Activated CD4-positive, alpha-beta memory T cell treated with anti-CD3 and anti-CD28 coated beads for 36 hours (primary cell): ENCODE measurements at regions of chr21 and their contacts with region 1.

Region 1: GRCh38 chr21:25573409-25574206 is 33.7 kb downstream of the MRPL39 start:
- DNase-seq: peak; percentile 80
- H3K4me3 Mint-ChIP-seq: peak overlapping the region; percentile 68
- H3K27ac Mint-ChIP-seq: peak overlapping the region; percentile 89
- H3K4me1 Mint-ChIP-seq: peaks cover 80% of the 10 kb centered on the region
- H3K27me3 Mint-ChIP-seq: no peaks in the 10 kb centered on the region

Region 2: GRCh38 chr21:25115021-25115420 is 458.6 kb before region 1 on chr21:
- CTCF ChIA-PET with region 1: no interaction called
- POLR2A ChIA-PET with region 1: no interaction called
- intact Hi-C with region 1: no loop called
- DNase-seq: no peak
- H3K4me3 Mint-ChIP-seq: no peak overlapping the region
- H3K27ac Mint-ChIP-seq: no peak overlapping the region
- H3K4me1 Mint-ChIP-seq: no peaks in the 10 kb centered on the region
- H3K27me3 Mint-ChIP-seq: no peaks in the 10 kb centered on the region

Region 3: GRCh38 chr21:25188677-25189079 is 384.9 kb before region 1 on chr21:
- CTCF ChIA-PET with region 1: no interaction called
- POLR2A ChIA-PET with region 1: no interaction called
- intact Hi-C with region 1: loop called (anchors 1 kb)
- DNase-seq: peak; percentile 12
- H3K4me3 Mint-ChIP-seq: no peak overlapping the region
- H3K27ac Mint-ChIP-seq: no peak overlapping the region
- H3K4me1 Mint-ChIP-seq: no peaks in the 10 kb centered on the region
- H3K27me3 Mint-ChIP-seq: no peaks in the 10 kb centered on the region

Region 4: DNA sequence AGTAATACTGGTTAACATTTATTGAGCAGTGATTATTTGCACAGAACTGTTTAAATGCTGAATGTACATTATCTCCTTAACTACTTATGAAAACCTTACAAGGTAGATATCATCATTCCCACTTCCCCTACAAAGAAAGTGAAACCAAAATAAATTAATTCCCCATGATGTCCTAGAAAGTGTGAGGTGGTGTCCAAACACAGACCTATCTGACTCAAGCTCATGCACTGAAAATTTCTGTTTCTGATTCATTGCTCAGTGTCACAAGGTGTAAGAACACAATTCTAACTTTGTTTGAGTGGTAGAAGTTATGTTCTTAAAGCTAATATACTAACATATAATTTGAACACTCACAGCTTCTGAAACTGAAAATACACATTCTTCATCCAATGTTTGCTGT is 145.1 kb before region 1 on chr21:
- CTCF ChIA-PET with region 1: interaction called, 7 read pairs
- POLR2A ChIA-PET with region 1: interaction called, 16 read pairs
- intact Hi-C with region 1: loop called (anchors 1 kb)
- DNase-seq: no peak
- H3K4me3 Mint-ChIP-seq: no peak overlapping the region
- H3K27ac Mint-ChIP-seq: peak overlapping the region; percentile 13
- H3K4me1 Mint-ChIP-seq: peaks cover 51% of the 10 kb centered on the region
- H3K27me3 Mint-ChIP-seq: no peaks in the 10 kb centered on the region

Region 5: DNA sequence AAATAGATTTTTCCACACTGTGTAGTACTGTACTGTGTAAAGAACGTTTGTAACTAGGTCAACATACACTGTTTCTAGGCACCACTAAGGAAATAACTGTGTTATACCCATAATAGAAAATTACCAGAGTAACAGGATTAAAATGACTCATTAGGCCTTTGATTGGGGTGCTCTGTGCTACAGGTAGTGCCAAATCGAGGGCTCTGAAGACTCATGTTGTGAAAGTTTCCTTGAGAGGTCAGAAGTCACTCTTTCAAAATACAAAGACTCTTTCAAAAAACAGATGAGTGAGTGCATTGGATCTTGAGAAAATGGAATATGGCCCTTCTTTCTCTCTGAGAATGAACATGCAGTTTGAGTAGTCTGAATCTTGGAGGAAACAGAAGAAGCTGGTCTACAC is 109.3 kb before region 1 on chr21:
- CTCF ChIA-PET with region 1: no interaction called
- POLR2A ChIA-PET with region 1: interaction called, 41 read pairs
- intact Hi-C with region 1: loop called (anchors 1 kb)
- DNase-seq: peak; percentile 38
- H3K4me3 Mint-ChIP-seq: peak overlapping the region; percentile 50
- H3K27ac Mint-ChIP-seq: peak overlapping the region; percentile 94
- H3K4me1 Mint-ChIP-seq: peaks cover 77% of the 10 kb centered on the region
- H3K27me3 Mint-ChIP-seq: no peaks in the 10 kb centered on the region

Region 6: DNA sequence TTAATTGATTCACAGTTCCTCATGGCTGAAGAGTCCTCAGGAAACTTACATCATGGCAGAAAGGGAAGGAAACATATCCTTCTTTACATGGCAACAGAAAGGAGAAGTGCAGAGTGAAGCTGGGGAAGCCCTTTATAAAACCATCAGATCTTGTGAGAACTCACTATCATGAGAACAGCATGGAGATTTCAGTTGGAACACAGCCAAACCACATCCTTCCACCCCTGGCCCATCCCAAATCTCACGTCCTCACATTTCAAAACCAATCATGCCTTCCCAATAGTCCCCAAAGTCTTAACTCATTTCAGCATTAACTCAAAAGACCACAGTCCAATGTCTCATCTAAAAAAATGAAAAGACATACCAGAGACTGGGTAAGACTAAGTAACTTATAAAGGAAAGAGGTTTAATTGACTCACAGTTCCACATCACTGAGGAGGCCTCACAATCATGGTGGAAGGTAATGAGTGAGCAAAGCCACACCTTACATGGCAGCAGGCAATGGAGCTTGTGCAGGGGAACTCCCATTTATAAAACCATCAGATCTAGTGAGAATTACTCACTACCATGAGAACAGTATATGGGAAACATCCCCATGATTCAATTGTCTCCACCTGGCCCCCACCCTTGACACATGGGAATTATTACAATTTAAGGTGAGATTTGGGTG is 71.5 kb before region 1 on chr21:
- CTCF ChIA-PET with region 1: no interaction called
- POLR2A ChIA-PET with region 1: interaction called, 117 read pairs
- intact Hi-C with region 1: loop called (anchors 1 kb)
- DNase-seq: peak; percentile 84
- H3K4me3 Mint-ChIP-seq: peak overlapping the region; percentile 39
- H3K27ac Mint-ChIP-seq: peak overlapping the region; percentile 87
- H3K4me1 Mint-ChIP-seq: peaks cover 57% of the 10 kb centered on the region
- H3K27me3 Mint-ChIP-seq: no peaks in the 10 kb centered on the region

Region 7: GRCh38 chr21:25561668-25562641 is 11.7 kb before region 1 on chr21:
- CTCF ChIA-PET with region 1: interaction called, 6 read pairs
- POLR2A ChIA-PET with region 1: interaction called, 250 read pairs
- intact Hi-C with region 1: loop called (anchors 1 kb)
- DNase-seq: peak; percentile 89
- H3K4me3 Mint-ChIP-seq: peak overlapping the region; percentile 80
- H3K27ac Mint-ChIP-seq: peak overlapping the region; percentile 94
- H3K4me1 Mint-ChIP-seq: peaks cover 52% of the 10 kb centered on the region
- H3K27me3 Mint-ChIP-seq: no peaks in the 10 kb centered on the region

Region 8: DNA sequence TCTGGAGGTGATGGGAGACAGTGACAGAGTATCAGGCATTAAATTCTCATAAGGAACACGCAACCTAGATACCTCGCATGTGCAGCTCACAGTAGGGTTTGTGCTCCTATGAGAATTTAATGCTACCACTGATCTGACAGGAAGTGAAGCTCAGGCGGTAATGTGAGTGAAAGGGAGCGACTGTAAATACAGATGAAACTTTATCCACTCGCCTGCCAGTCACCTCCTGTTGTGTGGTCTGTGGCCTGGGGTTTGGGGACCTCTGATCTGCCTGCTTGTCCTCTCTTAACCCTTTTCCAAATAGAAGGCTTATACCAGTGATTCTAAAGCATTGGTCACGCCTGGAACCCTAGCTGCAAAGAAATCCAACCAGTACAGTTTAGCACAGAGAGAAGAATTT is 176.5 kb after region 1 on chr21:
- CTCF ChIA-PET with region 1: no interaction called
- POLR2A ChIA-PET with region 1: no interaction called
- intact Hi-C with region 1: no loop called
- DNase-seq: no peak
- H3K4me3 Mint-ChIP-seq: no peak overlapping the region
- H3K27ac Mint-ChIP-seq: no peak overlapping the region
- H3K4me1 Mint-ChIP-seq: no peaks in the 10 kb centered on the region
- H3K27me3 Mint-ChIP-seq: no peaks in the 10 kb centered on the region